ENCODE measurements at regions of chr12 and their contacts with region 1.

Region 1: DNA sequence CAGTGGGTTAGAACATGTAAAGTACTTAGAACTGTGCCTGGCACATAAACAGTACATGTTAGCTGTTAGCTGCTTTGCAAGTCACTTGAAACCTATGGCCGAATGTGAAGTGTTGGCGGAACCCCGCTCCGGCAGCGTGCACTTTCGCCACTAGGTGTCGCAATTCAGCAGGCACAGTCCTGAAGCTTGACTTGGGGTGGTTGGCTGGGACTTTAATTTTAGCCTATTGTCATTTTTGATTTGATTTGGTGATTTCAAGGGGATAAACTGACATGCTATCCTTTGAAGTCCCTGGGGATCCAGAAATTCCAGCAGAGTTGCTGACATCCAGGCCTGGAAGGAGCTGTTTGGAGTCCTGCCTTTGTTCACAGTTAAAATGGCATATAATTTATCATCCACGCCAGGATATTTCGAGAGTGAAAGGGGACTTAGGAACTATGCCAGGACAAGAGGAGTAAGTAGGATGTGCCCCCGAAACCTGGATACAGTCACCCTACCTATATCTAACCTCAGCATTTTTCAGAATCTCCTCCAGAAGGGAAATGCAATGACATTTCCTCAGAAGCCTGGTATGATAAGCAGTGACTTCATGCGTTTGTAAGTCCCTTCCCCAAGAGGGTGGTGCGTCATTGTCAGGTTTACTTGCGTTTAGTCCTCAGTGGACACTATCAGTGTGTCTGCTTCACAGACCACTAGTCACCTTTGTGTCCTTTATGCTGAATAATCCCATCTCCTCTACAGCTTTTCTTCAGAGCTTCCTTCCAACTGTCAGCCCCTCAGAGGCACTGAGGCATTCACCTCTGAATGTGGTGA is 3.5 kb upstream of the TSPAN9 start:
- DNase-seq: peak; percentile 75 to 91 (median 85)
- H3K4me3 ChIP-seq: peak overlapping the region in 6 of 59 donors; percentile 16 to 34 (median 18)
- H3K27ac ChIP-seq: peak overlapping the region in 1 of 59 donors; percentile 4
- H3K27me3 ChIP-seq: no peaks in the 10 kb centered on the region
- CTCF ChIP-seq: peak; percentile 93 to 100 (median 98)

Region 2: DNA sequence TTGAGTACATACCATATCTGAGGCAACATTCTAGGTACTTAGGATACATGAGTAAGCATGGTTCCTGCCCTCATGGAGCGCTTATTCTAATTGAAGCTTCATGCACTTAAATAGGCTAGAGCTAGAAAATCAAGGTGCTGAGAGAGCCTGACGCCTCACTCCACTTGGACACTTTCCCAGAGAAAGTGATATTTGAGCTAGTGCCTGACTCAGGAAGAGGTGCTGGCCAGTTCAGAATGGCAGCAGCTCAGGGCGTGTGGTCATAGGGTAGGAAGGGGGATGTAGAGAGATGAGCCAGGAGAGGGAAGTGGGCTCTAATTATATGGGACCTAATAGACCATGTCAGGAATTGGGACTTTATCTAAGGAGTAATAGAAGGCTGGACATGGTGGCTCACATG is 149.6 kb before region 1 on chr12:
- intact Hi-C with region 1: no loop called
- DNase-seq: no peak
- H3K4me3 ChIP-seq: no peak overlapping the region
- H3K27ac ChIP-seq: no peak overlapping the region
- H3K27me3 ChIP-seq: no peaks in the 10 kb centered on the region
- CTCF ChIP-seq: no peak

Region 3: DNA sequence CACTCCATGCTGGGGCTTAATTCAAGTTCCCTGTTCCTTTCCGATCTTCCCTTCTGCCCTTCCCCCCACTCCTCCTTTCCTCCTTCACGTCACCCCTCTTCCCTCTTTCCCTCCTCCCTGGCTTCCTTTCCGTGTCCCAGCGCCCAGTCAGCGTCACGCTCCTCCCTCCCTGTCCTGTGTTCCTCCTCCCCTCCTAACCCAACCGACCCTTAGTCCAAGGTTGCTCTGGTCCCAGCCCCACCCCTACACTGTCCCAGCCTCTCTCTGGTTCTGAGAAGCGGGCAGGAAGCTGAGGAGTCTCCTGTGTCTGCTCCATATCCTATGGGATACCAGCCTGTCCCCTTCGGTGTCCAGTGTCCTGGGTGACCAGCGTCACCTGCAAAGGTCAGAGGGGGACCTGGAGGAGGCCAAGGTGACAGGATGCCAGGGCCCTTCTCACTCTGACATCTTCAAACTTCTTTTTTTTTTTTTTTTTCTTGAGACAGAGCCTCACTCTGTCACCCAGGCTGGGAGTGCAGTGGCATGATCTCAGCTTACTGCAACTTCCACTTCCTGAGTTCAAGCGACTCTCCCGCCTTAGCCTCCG is 52.7 kb before region 1 on chr12:
- intact Hi-C with region 1: no loop called
- DNase-seq: no peak
- H3K4me3 ChIP-seq: no peak overlapping the region
- H3K27ac ChIP-seq: no peak overlapping the region
- H3K27me3 ChIP-seq: no peaks in the 10 kb centered on the region
- CTCF ChIP-seq: no peak

Region 4: GRCh38 chr12:3129301-3130056 is 55.8 kb after region 1 on chr12:
- intact Hi-C with region 1: loop called in 1 of 2 experiments (anchors 5 kb)
- DNase-seq: no peak
- H3K4me3 ChIP-seq: no peak overlapping the region
- H3K27ac ChIP-seq: peak overlapping the region in 11 of 59 donors; percentile 4 to 70 (median 29)
- H3K27me3 ChIP-seq: peaks cover 0 to 31% (median 0%) of the 10 kb centered on the region in 45 donors
- CTCF ChIP-seq: no peak

Region 5: GRCh38 chr12:3135522-3136461 is 62.1 kb after region 1 on chr12:
- intact Hi-C with region 1: loop called (anchors 5 kb)
- DNase-seq: peak in 3 of 10 donors; percentile 38 to 77 (median 39)
- H3K4me3 ChIP-seq: no peak overlapping the region
- H3K27ac ChIP-seq: peak overlapping the region in 1 of 59 donors; percentile 48
- H3K27me3 ChIP-seq: peaks cover 0 to 34% (median 0%) of the 10 kb centered on the region in 45 donors
- CTCF ChIP-seq: peak; percentile 56 to 93 (median 84)

Region 6: DNA sequence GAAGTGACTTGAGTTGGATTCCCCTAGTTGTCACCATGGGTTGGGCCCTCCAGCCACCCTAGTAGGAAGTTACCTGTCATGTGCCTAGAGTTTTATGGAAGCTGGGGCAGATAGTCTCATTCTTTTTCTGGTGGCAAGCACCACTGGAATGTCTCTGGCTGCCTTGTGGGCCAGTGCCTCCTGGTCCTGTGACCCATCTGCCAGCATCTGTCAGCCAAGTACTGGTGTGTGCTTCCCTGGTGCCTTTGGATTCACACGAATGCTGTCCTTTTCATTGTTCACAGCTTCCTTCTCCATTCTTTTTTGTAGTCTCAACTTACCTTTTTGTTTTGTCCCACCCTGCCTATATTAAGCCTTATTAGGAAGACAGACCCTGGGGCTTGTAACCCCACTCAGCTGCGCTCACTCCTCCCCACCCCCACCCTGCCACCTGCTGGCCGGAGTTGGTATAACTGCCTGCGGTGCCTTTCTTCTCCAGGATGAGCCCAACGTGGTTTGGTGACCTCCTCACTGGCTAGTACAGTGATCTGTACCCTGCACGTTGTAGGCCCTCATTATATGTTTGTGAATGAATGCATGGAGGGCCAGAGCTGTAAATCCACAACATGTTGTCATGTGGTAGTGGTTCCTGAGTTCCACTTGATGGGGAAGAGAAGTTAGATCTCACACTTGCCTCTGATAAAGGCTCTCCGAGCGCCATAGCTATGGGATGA is 129.2 kb after region 1 on chr12:
- intact Hi-C with region 1: loop called (anchors 2 to 5 kb)
- DNase-seq: peak in 7 of 10 donors; percentile 35 to 83 (median 43)
- H3K4me3 ChIP-seq: peak overlapping the region in 5 of 59 donors; percentile 13 to 65 (median 17)
- H3K27ac ChIP-seq: peak overlapping the region in 1 of 59 donors; percentile 89
- H3K27me3 ChIP-seq: peaks cover 0 to 60% (median 11%) of the 10 kb centered on the region in 45 donors
- CTCF ChIP-seq: peak; percentile 59 to 90 (median 81)

Region 7: DNA sequence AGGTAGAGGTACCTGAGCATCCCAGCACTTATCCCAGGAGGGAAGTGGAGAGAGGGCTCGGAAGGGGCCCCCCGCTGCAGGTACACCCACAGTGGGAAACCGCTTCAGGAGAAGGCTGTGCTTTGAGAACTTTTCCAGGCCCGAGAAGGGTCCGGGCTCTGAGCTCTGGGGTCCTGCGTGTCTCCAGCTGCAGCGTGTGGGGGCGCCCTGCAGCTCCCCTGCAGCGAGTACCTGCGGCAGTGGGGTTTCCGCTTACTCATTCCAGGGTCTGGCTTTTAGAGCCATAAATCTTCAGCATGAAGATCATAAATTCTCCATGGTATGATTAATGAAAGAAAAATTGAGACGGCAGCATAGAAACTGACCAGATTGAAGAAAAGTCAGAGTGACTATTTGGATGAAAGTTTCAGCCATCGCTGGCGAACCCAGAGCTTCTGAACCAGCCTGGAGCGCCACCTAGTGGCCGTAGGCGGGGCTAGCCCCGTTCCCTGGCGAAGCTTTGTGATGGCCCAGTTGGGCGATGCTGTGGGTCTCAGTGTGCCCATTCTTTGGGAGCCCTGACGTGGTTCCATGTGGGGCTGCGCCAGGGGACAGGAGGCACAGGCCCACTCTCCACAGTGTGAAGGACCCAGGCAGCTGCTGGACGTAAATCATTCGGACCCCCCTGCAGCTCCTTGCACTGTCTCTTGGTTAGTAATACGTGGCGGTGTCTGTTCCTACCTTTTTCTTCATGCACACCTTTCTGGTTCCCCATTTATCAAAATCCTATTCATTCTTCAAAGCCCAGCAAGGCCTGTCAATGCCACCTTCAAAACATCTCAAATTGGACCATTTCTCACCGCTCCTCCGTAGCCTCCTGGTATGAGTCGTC is 201.8 kb after region 1 on chr12:
- intact Hi-C with region 1: loop called (anchors 1 to 5 kb)
- DNase-seq: peak in 9 of 10 donors; percentile 72 to 89 (median 78)
- H3K4me3 ChIP-seq: no peak overlapping the region
- H3K27ac ChIP-seq: peak overlapping the region in 3 of 59 donors; percentile 4 to 93 (median 24)
- H3K27me3 ChIP-seq: peaks cover 0 to 18% (median 0%) of the 10 kb centered on the region in 45 donors
- CTCF ChIP-seq: peak; percentile 80 to 100 (median 96)

Measured in dorsolateral prefrontal cortex (tissue), 120 donors.